ENCODE measurements at regions of chr3 and their contacts with region 1.

Region 1: GRCh38 chr3:141311496-141312353 is 56.6 kb upstream of the ZBTB38 start:
- DNase-seq: peak; percentile 91
- H3K4me3 ChIP-seq: peak overlapping the region; percentile 73 to 77
- H3K27ac ChIP-seq: peak overlapping the region; percentile 44 to 82; a peak in 3 of 4 replicates
- H3K4me1 ChIP-seq: peaks cover 0 to 15% of the 10 kb centered on the region in 2 experiments; a peak in 2 of 4 replicates
- H3K27me3 ChIP-seq: no peaks in the 10 kb centered on the region
- CTCF ChIP-seq: peak; percentile 76
- EP300 ChIP-seq: 0 out of 4 replicates have a peak, but pooled peaks of 1 of the 2 experiments have one; percentile 26
- RAD21 ChIP-seq: peak; percentile 83

Region 2: GRCh38 chr3:141255846-141256261 is 55.9 kb before region 1 on chr3:
- CTCF ChIA-PET with region 1: no interaction called
- POLR2A ChIA-PET with region 1: no interaction called
- DNase-seq: no peak
- H3K4me3 ChIP-seq: no peak overlapping the region; a peak in 1 of 4 replicates
- H3K27ac ChIP-seq: no peak overlapping the region
- H3K4me1 ChIP-seq: peaks cover 0 to 5% of the 10 kb centered on the region in 2 experiments; a peak in 1 of 4 replicates
- H3K27me3 ChIP-seq: no peaks in the 10 kb centered on the region
- CTCF ChIP-seq: peak; percentile 39
- EP300 ChIP-seq: no peak
- RAD21 ChIP-seq: peak; percentile 41

Region 3: GRCh38 chr3:141328286-141329166 is 16.8 kb after region 1 on chr3:
- CTCF ChIA-PET with region 1: interaction called, 19 read pairs
- POLR2A ChIA-PET with region 1: no interaction called
- DNase-seq: no peak
- H3K4me3 ChIP-seq: no peak overlapping the region
- H3K27ac ChIP-seq: no peak overlapping the region
- H3K4me1 ChIP-seq: peaks cover 5 to 18% of the 10 kb centered on the region in 2 experiments; a peak in 3 of 4 replicates
- H3K27me3 ChIP-seq: no peaks in the 10 kb centered on the region
- CTCF ChIP-seq: no peak
- EP300 ChIP-seq: no peak
- RAD21 ChIP-seq: no peak

Region 4: DNA sequence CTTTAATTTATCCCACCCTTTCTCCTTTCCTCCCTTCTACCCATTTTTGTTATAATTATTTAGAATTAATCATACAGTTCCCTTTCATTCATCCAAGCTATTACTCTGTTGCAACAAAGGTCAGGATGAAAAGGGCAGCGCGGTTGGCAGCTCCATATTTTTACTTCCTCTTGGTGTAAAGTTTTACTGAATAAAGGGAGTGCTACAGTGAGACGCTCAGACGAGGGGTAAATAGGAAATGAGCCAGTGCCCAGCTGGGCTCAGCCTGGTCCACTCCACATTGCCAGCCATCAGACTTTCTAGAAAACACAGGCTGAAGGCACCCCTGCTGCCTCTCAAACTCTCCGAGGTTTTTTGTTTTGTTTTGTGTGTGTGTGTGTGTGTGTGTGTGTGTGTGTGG is 34.7 kb after region 1 on chr3:
- CTCF ChIA-PET with region 1: interaction called, 14 read pairs
- POLR2A ChIA-PET with region 1: no interaction called
- DNase-seq: no peak
- H3K4me3 ChIP-seq: no peak overlapping the region
- H3K27ac ChIP-seq: no peak overlapping the region
- H3K4me1 ChIP-seq: no peaks in the 10 kb centered on the region
- H3K27me3 ChIP-seq: no peaks in the 10 kb centered on the region
- CTCF ChIP-seq: no peak
- EP300 ChIP-seq: no peak
- RAD21 ChIP-seq: no peak

Region 5: GRCh38 chr3:141460097-141460704 is 148.5 kb after region 1 on chr3:
- CTCF ChIA-PET with region 1: interaction called, 40 read pairs
- POLR2A ChIA-PET with region 1: interaction called, 4 read pairs
- DNase-seq: peak; percentile 84
- H3K4me3 ChIP-seq: peak overlapping the region in 1 of 2 experiments; percentile 2; a peak in 1 of 4 replicates
- H3K27ac ChIP-seq: no peak overlapping the region
- H3K4me1 ChIP-seq: no peaks in the 10 kb centered on the region; a peak in 2 of 4 replicates
- H3K27me3 ChIP-seq: no peaks in the 10 kb centered on the region
- CTCF ChIP-seq: peak; percentile 89
- EP300 ChIP-seq: no peak
- RAD21 ChIP-seq: peak; percentile 91

Region 6: GRCh38 chr3:141561426-141562034 is 249.8 kb after region 1 on chr3:
- CTCF ChIA-PET with region 1: interaction called, 21 read pairs
- POLR2A ChIA-PET with region 1: interaction called, 4 read pairs
- DNase-seq: peak; percentile 47
- H3K4me3 ChIP-seq: no peak overlapping the region; a peak in 1 of 4 replicates
- H3K27ac ChIP-seq: no peak overlapping the region
- H3K4me1 ChIP-seq: peaks cover 0 to 18% of the 10 kb centered on the region in 2 experiments; a peak in 1 of 4 replicates
- H3K27me3 ChIP-seq: no peaks in the 10 kb centered on the region
- CTCF ChIP-seq: peak; percentile 99
- EP300 ChIP-seq: no peak
- RAD21 ChIP-seq: peak; percentile 98